ENCODE measurements at regions of chr15 and their contacts with region 1.

Region 1: GRCh38 chr15:80384432-80384831 is 19.8 kb upstream of the ARNT2 start:
- DNase-seq: no peak
- ATAC-seq: no peak
- H3K4me3 ChIP-seq: no peak overlapping the region
- H3K27ac ChIP-seq: no peak overlapping the region
- H3K4me1 ChIP-seq: no peaks in the 10 kb centered on the region
- H3K27me3 ChIP-seq: peaks cover 3% of the 10 kb centered on the region

Region 2: DNA sequence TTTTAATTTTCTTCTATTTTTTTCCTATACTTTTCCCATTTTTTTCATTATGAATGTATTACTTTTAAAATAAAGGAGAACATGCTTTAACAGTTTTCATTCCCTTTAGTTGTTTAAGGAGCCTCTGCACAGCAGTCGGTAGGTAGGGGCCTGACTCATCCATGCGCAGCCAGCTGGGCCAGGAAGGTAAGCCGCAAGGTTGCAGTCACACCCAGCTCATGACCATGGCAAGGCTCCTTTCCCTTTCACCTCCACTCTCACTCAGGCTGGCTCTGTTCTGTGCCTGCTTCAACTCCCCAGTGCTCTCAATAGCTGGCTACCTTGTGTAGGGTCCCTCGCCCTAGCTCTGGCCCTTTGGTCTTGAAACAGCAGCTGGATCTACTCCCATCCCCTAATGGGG is 1119.3 kb before region 1 on chr15:
- intact Hi-C with region 1: loop called in 1 of 4 experiments (anchors 10 kb)
- DNase-seq: no peak
- ATAC-seq: no peak
- H3K4me3 ChIP-seq: no peak overlapping the region
- H3K27ac ChIP-seq: no peak overlapping the region
- H3K4me1 ChIP-seq: peaks cover 3% of the 10 kb centered on the region
- H3K27me3 ChIP-seq: no peaks in the 10 kb centered on the region